ENCODE measurements at regions of chr22 and their contacts with region 1.

Region 1: DNA sequence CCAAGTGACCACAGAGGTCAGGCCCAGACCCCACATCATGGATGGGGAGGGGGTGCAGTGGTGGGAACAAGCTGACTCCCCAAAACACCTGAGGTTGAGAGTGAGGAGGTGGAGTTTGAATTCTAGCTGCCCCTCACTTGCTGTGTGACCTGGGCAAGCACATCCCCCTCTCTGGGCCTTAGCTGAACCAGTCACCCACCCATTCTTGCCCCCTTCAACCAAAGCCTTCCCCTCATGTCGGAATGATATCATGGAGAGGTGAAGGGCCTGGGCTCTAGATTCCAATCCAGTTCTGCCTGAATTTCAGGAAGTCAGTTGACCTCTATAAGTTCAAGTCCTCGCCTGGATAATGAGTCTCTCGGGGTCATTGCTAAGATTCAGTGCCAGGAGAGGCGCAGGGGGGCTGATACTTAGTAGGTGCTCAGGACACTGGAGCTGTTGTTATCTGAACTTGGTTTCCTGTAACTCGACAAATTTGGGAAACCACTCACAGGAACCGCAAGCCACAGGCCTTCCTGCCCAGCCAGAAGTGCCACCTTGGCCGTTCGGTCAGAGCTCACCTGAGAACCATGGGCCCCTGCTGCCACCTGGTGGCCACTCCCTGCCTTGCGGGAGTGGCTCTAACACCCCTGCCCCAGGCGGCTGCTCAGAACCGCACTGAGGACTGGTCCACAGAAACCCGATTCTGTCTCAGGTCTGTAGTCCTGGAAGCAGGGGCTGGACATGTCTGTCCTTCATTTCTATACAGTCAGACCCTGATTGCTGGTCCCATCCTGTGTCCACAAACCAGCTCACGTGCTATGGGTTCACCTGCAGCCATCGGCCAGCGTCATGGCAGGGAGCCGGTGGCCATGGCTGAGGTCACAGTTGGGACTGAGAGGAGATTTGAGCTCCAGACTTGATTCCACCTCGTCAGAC is 6.9 kb downstream of the CDC42EP1 start:
- DNase-seq: peak; percentile 79 to 96 (median 89)
- ATAC-seq: peak; percentile 90
- H3K4me3 ChIP-seq: peak overlapping the region; percentile 22
- H3K4me3 Mint-ChIP-seq: peak overlapping the region; percentile 69
- H3K27ac ChIP-seq: no peak overlapping the region
- H3K27ac Mint-ChIP-seq: no peak overlapping the region
- H3K4me1 ChIP-seq: peaks cover 28% of the 10 kb centered on the region
- H3K4me1 Mint-ChIP-seq: peaks cover 29% of the 10 kb centered on the region
- H3K27me3 ChIP-seq: peaks cover 9 to 17% of the 10 kb centered on the region in 2 experiments
- H3K27me3 Mint-ChIP-seq: peaks cover 26% of the 10 kb centered on the region
- CTCF ChIP-seq: peak; percentile 92

Region 2: GRCh38 chr22:37472418-37473006 is 94.7 kb before region 1 on chr22:
- CTCF ChIA-PET with region 1: interaction called, 15 read pairs
- POLR2A ChIA-PET with region 1: interaction called, 5 read pairs
- intact Hi-C with region 1: no loop called
- DNase-seq: peak; percentile 25 to 73 (median 47)
- ATAC-seq: no peak
- H3K4me3 ChIP-seq: no peak overlapping the region
- H3K4me3 Mint-ChIP-seq: no peak overlapping the region
- H3K27ac ChIP-seq: no peak overlapping the region
- H3K27ac Mint-ChIP-seq: peak overlapping the region; percentile 62
- H3K4me1 ChIP-seq: peaks cover 9% of the 10 kb centered on the region
- H3K4me1 Mint-ChIP-seq: peaks cover 18% of the 10 kb centered on the region
- H3K27me3 ChIP-seq: no peaks in the 10 kb centered on the region
- H3K27me3 Mint-ChIP-seq: no peaks in the 10 kb centered on the region
- CTCF ChIP-seq: peak; percentile 70

Region 3: DNA sequence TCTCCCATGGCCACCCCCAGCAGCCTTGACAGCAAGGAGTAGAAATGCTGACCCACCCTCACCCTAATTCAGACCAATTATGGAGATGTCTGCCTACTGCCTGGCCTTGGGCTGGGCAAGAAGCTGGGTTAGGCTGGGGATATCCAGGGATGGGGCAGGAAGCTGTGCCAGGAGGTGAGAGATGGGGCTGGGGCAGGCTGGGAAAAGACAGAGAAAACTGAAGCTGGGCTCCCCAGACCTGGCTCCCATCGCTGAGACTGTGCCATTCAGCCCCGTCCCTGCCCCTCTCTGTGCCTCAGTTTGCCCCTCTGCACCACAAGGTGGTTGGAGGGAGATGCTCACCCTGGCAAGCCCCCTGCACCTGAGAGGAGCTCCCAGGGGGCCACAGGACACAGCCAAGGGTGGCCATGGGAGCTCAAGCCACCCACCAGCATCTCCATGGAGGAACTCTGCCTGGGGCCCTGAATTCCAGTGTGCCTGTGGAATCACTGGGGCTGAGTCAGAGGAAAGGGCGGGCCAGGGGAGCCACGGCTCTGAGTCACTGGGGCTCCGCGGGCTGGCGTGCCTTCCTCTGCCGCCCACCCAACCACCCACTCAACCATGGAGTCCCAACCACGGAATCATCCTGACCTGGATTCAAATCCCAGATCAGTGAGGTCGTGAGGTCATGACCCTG is 42.0 kb before region 1 on chr22:
- CTCF ChIA-PET with region 1: no interaction called
- POLR2A ChIA-PET with region 1: no interaction called
- intact Hi-C with region 1: no loop called
- DNase-seq: peak in 2 of 14 experiments; percentile 38 to 54
- ATAC-seq: no peak
- H3K4me3 ChIP-seq: no peak overlapping the region
- H3K4me3 Mint-ChIP-seq: no peak overlapping the region
- H3K27ac ChIP-seq: no peak overlapping the region
- H3K27ac Mint-ChIP-seq: no peak overlapping the region
- H3K4me1 ChIP-seq: peaks cover 6% of the 10 kb centered on the region
- H3K4me1 Mint-ChIP-seq: peaks cover 8% of the 10 kb centered on the region
- H3K27me3 ChIP-seq: peaks cover 32 to 36% of the 10 kb centered on the region in 2 experiments
- H3K27me3 Mint-ChIP-seq: peaks cover 45% of the 10 kb centered on the region
- CTCF ChIP-seq: no peak

Region 4: GRCh38 chr22:37544955-37545699 is 22.0 kb before region 1 on chr22:
- CTCF ChIA-PET with region 1: interaction called, 119 read pairs
- POLR2A ChIA-PET with region 1: interaction called, 29 read pairs
- intact Hi-C with region 1: no loop called
- DNase-seq: peak in 13 of 14 experiments; percentile 17 to 68 (median 31)
- ATAC-seq: peak; percentile 46
- H3K4me3 ChIP-seq: no peak overlapping the region
- H3K4me3 Mint-ChIP-seq: no peak overlapping the region
- H3K27ac ChIP-seq: no peak overlapping the region
- H3K27ac Mint-ChIP-seq: no peak overlapping the region
- H3K4me1 ChIP-seq: peaks cover 33% of the 10 kb centered on the region
- H3K4me1 Mint-ChIP-seq: peaks cover 11% of the 10 kb centered on the region
- H3K27me3 ChIP-seq: no peaks in the 10 kb centered on the region
- H3K27me3 Mint-ChIP-seq: peaks cover 29% of the 10 kb centered on the region
- CTCF ChIP-seq: peak; percentile 30

Region 5: GRCh38 chr22:37591823-37592404 is 24.8 kb after region 1 on chr22:
- CTCF ChIA-PET with region 1: interaction called, 30 read pairs
- POLR2A ChIA-PET with region 1: interaction called, 28 read pairs
- intact Hi-C with region 1: loop called (anchors 1 kb)
- DNase-seq: no peak
- ATAC-seq: no peak
- H3K4me3 ChIP-seq: peak overlapping the region; percentile 24
- H3K4me3 Mint-ChIP-seq: peak overlapping the region; percentile 73
- H3K27ac ChIP-seq: peak overlapping the region in 1 of 2 donors; percentile 31
- H3K27ac Mint-ChIP-seq: peak overlapping the region; percentile 60
- H3K4me1 ChIP-seq: peaks cover 17% of the 10 kb centered on the region
- H3K4me1 Mint-ChIP-seq: peaks cover 13% of the 10 kb centered on the region
- H3K27me3 ChIP-seq: no peaks in the 10 kb centered on the region
- H3K27me3 Mint-ChIP-seq: no peaks in the 10 kb centered on the region
- CTCF ChIP-seq: no peak